Activated CD8-positive, alpha-beta T cell treated with anti-CD3 and anti-CD28 coated beads for 36 hours (primary cell): ENCODE measurements at regions of chr9 and their contacts with region 1.

Region 1: DNA sequence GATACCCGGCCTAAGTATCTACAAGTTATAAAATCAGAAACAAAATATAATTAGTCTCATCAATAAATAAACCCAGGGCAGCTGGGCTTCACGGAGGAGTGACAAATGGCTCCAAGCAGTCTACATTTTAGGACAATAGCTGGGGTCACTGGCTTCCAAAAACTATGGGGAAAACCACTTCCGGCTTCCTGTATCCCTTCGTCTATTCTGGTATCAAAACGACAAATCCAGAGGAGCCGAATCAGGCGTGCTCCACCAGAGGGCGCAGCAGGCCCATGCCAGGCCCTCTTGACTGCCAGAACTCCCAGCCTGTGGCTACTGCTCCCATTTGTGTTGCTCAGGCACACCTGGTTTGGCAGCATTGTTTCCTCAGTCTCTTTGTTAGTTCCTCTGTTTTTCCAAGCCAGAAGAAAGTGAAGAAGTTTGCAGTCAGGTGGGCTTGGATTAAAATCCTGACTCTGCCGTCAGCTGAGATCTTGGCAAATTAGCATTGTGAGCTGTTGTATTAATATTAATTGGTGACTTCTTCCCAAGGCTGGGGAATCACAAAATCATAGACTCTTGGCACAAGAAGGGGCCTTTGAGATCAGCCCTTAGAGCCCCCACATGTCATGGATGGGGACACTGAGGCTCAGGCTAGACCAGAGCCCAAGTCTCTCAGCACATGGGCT is 11.6 kb upstream of the RAB14 start:
- DNase-seq: peak; percentile 83
- ATAC-seq: peak; percentile 79
- H3K4me3 Mint-ChIP-seq: no peak overlapping the region
- H3K27ac Mint-ChIP-seq: no peak overlapping the region
- H3K4me1 Mint-ChIP-seq: peaks cover 4% of the 10 kb centered on the region
- H3K27me3 Mint-ChIP-seq: no peaks in the 10 kb centered on the region
- CTCF ChIP-seq: peak; percentile 92

Region 2: DNA sequence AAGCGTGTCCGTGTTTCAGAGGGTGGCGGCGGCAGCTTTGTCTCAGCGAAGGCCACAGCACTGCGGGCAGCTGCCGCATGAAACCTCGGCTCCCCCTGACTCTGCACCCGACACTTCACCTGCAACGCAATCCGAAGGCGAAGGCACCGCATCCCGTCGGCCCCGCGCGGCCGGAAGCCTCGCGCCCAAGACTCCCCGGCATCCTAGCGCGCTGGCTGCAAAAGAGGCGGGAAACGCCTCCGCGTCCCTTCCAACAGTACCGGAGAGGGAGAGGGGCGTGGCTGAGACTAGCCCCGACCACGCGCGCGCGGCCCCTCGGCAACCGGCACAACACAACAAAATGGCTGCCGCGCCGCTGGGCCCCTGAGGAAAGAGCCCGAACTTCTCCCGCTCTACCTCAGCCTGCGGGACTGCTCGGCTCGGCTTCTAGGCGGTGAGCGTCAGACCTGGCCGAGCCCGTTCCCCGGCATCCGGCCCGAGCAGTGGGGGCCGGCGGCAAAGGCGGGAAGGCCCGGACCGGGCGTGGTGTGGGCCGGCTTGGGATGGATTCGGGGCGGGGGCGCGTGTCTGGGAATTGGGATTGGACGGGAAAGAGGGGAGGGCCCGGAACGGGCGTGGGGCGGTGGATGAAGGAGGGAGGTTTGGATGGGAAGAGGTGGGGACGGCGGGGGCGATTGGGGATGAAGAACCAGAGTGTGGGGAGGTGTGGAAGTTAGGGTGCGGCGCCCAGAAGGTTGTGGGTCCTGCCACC is 138.5 kb before region 1 on chr9 and contains the start of gene CNTRL:
- CTCF ChIA-PET with region 1: no interaction called
- POLR2A ChIA-PET with region 1: no interaction called
- intact Hi-C with region 1: no loop called
- DNase-seq: peak; percentile 98
- ATAC-seq: peak; percentile 91
- H3K4me3 Mint-ChIP-seq: peak within 1 kb of the TSS; percentile 97
- H3K27ac Mint-ChIP-seq: peak within 1 kb of the TSS; percentile 97
- H3K4me1 Mint-ChIP-seq: peaks cover 38% of the 10 kb centered on the region
- H3K27me3 Mint-ChIP-seq: no peaks in the 10 kb centered on the region
- CTCF ChIP-seq: no peak
- total RNA-seq, gene CNTRL: 62.8 to 69.8 TPM

Region 3: DNA sequence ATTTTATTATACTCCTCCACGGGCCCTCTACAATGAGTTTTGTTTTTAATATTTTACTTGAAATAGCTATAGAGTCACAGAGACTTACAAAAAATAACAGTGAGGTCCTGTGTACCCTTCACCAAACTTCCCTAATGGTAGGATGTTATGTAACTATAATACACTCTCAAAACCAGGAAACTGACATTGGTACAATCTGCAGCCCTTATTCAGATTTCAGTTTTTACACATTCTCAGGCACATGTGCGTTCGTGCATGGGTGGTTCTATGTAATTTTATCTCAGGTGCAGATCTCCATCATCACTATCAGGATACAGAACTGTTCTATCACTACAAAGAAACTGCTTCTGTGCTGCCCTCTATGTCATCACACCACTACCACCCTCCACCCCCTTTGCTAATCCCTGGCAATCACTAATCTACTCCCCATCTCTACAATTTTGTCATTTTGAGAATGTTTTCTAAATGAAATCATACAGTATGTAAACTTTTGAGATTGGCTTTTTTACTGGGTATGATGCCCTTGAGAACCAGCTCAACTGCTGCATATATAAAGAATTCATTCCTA is 28.0 kb before region 1 on chr9:
- CTCF ChIA-PET with region 1: interaction called, 18 read pairs
- POLR2A ChIA-PET with region 1: interaction called, 3 read pairs
- intact Hi-C with region 1: no loop called
- DNase-seq: no peak
- ATAC-seq: peak; percentile 14
- H3K4me3 Mint-ChIP-seq: no peak overlapping the region
- H3K27ac Mint-ChIP-seq: peak overlapping the region; percentile 71
- H3K4me1 Mint-ChIP-seq: peaks cover 67% of the 10 kb centered on the region
- H3K27me3 Mint-ChIP-seq: no peaks in the 10 kb centered on the region
- CTCF ChIP-seq: no peak

Region 4: DNA sequence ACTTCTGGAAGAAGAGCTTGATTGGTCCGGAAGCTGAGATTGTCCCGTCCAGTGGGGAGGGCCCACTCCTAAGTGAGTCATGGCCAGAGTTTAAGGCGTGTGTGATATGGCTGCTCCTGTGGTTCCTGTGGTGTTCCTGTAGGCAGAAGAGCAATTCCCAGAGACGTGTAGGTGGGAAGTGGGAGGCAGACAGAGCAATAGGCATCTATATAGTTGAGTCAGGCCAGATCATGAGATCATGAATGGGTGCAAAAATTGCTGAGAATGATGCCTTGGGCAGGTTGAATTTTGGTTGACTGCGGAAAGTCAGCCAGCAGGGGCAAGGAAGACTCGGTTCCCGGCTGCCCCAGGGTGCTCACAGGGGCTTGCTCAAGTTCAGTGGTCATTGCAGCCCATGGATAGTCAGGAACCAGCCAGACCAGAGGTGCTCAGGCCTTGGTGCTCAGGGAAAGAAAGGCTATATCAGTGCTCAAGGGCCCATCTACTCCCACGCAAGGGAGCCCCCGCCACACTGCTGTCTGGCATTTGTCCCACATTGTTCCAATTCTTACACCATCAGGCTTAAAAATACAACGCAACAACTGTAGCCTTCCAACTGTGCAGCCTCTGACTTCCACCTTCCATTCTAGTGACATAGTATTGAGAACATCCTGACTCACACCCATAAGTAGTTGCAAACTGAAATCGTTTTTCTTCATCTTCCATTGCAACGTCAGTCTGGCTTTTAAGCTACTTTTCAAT is 33.7 kb after region 1 on chr9:
- CTCF ChIA-PET with region 1: interaction called, 21 read pairs
- POLR2A ChIA-PET with region 1: no interaction called
- intact Hi-C with region 1: no loop called
- DNase-seq: no peak
- ATAC-seq: no peak
- H3K4me3 Mint-ChIP-seq: no peak overlapping the region
- H3K27ac Mint-ChIP-seq: no peak overlapping the region
- H3K4me1 Mint-ChIP-seq: no peaks in the 10 kb centered on the region
- H3K27me3 Mint-ChIP-seq: no peaks in the 10 kb centered on the region
- CTCF ChIP-seq: no peak

Region 5: DNA sequence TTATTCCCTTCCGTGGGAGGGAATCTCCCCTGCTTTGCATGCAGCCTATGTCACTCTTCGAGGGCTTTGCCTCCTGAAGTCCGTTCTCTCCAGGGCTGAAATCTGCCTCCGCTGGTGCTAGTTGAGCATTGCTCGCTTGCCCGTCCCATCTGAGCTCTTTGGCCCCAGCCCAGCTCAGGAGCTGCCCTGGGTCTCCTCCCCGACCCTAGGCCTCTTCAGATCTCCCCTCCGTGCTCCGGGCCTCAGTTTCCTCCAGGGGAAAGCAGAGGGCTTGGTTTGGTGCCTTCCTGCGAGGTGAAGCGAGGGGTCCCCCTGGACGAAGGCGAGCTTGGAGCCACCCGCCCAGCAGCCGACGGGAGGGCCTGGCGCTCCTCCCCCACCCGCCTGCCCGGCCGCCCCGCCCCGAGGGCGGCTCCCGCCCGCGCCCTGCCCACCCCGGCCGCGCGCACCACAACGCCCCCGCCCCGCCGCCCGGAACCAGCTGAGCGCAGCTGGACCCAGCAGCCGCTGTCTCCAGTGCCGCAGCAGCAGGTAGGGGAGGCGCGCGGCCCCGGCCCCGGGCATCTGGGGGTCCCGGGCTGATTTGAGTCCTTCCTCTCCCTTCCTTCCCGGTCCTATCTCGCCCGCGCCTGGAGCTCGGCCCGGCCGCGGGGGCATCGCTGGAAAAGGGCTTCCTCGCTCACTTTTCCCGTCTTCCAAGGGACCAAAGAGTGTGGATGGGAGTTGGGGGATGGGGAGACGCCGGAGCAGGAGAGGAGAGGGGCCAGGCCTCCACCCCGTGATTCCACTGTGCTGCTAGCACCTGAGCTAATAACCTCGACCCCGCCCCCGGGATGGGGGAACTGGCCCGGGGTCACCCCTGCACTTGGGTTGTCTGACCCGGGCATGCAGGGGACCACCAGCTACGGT is 54.7 kb after region 1 on chr9 and contains the start of gene GSN:
- CTCF ChIA-PET with region 1: interaction called, 11 read pairs
- POLR2A ChIA-PET with region 1: no interaction called
- intact Hi-C with region 1: no loop called
- DNase-seq: peak; percentile 56
- ATAC-seq: peak; percentile 86
- H3K4me3 Mint-ChIP-seq: peak within 1 kb of the TSS; percentile 50
- H3K27ac Mint-ChIP-seq: no peak within 1 kb of the TSS
- H3K4me1 Mint-ChIP-seq: peaks cover 13% of the 10 kb centered on the region
- H3K27me3 Mint-ChIP-seq: peaks cover 13% of the 10 kb centered on the region
- CTCF ChIP-seq: no peak
- total RNA-seq, gene GSN: 1.9 to 2.2 TPM

Region 6: GRCh38 chr9:121322037-121322775 is 108.9 kb after region 1 on chr9:
- CTCF ChIA-PET with region 1: interaction called, 39 read pairs
- POLR2A ChIA-PET with region 1: no interaction called
- intact Hi-C with region 1: no loop called
- DNase-seq: no peak
- ATAC-seq: peak; percentile 18
- H3K4me3 Mint-ChIP-seq: no peak overlapping the region
- H3K27ac Mint-ChIP-seq: no peak overlapping the region
- H3K4me1 Mint-ChIP-seq: peaks cover 14% of the 10 kb centered on the region
- H3K27me3 Mint-ChIP-seq: no peaks in the 10 kb centered on the region
- CTCF ChIP-seq: no peak